ENCODE measurements at regions of chr22 and their contacts with region 1.

Region 1: GRCh38 chr22:35648066-35649025 is at the start of gene APOL6:
- DNase-seq: peak; percentile 78 to 83 (median 80)
- H3K4me3 ChIP-seq: peak within 1 kb of the TSS; percentile 90
- H3K4me3 Mint-ChIP-seq: peak within 1 kb of the TSS; percentile 100
- H3K27ac ChIP-seq: peak within 1 kb of the TSS; percentile 96
- H3K27ac Mint-ChIP-seq: peak within 1 kb of the TSS; percentile 99 to 100 (median 99)
- H3K4me1 ChIP-seq: peaks cover 33% of the 10 kb centered on the region
- H3K4me1 Mint-ChIP-seq: peaks cover 14 to 65% (median 35%) of the 10 kb centered on the region in 4 donors
- H3K27me3 ChIP-seq: no peaks in the 10 kb centered on the region
- H3K27me3 Mint-ChIP-seq: no peaks in the 10 kb centered on the region
- total RNA-seq, gene APOL6: 50.6 to 52.0 TPM

Region 2: GRCh38 chr22:35627264-35628041 is 20.9 kb before region 1 on chr22:
- CTCF ChIA-PET with region 1: interaction called, 12 read pairs
- POLR2A ChIA-PET with region 1: interaction called, 13 read pairs
- intact Hi-C with region 1: no loop called
- DNase-seq: peak in 4 of 5 donors; percentile 22 to 37 (median 31)
- H3K4me3 ChIP-seq: peak overlapping the region in 1 of 2 donors; percentile 30
- H3K4me3 Mint-ChIP-seq: peak overlapping the region; percentile 31 to 85 (median 72)
- H3K27ac ChIP-seq: no peak overlapping the region
- H3K27ac Mint-ChIP-seq: peak overlapping the region; percentile 10 to 74 (median 66)
- H3K4me1 ChIP-seq: peaks cover 16% of the 10 kb centered on the region
- H3K4me1 Mint-ChIP-seq: peaks cover 10 to 23% (median 18%) of the 10 kb centered on the region in 4 donors
- H3K27me3 ChIP-seq: no peaks in the 10 kb centered on the region
- H3K27me3 Mint-ChIP-seq: peaks cover 0 to 2% of the 10 kb centered on the region in 2 donors

Region 3: DNA sequence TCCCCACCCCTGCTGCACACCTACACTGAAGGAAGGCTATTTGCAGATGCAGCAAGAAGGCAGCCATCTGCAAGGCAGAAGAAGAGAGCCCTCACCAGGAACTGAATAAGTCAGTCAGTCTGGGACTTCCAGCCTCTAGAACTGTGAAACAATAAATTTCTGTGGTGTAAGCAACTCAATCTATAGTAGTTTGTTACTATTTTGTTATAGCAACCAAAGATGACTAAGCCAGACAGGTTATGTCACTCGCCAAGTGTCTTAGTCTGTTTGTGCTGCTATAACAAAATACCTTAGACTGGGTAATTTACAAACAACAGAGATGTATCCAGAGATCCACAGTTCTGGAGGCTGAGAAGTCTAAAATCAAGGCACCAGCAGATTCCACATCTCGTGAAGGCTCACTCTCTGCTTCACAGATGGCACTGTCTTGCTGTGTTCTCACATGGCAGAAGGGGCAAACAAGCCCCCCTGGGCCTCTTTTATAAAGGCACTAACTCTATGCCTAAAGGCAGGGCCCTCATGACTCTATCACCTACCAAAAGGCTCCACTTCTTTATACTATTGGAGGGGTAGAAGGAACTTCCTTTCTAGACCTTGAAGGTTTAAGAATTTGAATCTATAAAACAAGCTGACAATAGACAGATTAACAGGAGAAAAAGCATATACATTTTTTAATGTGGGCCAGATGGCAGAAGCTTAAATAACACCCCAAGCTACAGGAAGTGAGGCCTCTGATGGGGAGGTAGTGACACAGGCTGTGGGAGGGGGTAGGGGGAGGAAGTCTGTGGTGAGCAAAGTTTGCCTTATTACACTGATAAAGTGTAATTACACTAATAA is 12.2 kb after region 1 on chr22:
- CTCF ChIA-PET with region 1: interaction called, 13 read pairs
- POLR2A ChIA-PET with region 1: interaction called, 214 read pairs
- intact Hi-C with region 1: loop called (anchors 1 kb)
- DNase-seq: peak; percentile 78 to 91 (median 80)
- H3K4me3 ChIP-seq: peak overlapping the region; percentile 11 to 34
- H3K4me3 Mint-ChIP-seq: peak overlapping the region; percentile 52 to 87 (median 79)
- H3K27ac ChIP-seq: peak overlapping the region; percentile 90
- H3K27ac Mint-ChIP-seq: peak overlapping the region; percentile 92 to 99 (median 96)
- H3K4me1 ChIP-seq: peaks cover 80% of the 10 kb centered on the region
- H3K4me1 Mint-ChIP-seq: peaks cover 45 to 87% (median 70%) of the 10 kb centered on the region in 4 donors
- H3K27me3 ChIP-seq: no peaks in the 10 kb centered on the region
- H3K27me3 Mint-ChIP-seq: no peaks in the 10 kb centered on the region

Region 4: GRCh38 chr22:35703861-35704584 is 55.7 kb after region 1 on chr22:
- CTCF ChIA-PET with region 1: no interaction called
- POLR2A ChIA-PET with region 1: no interaction called
- intact Hi-C with region 1: loop called (anchors 5 kb)
- DNase-seq: no peak
- H3K4me3 ChIP-seq: no peak overlapping the region
- H3K4me3 Mint-ChIP-seq: no peak overlapping the region
- H3K27ac ChIP-seq: no peak overlapping the region
- H3K27ac Mint-ChIP-seq: no peak overlapping the region
- H3K4me1 ChIP-seq: no peaks in the 10 kb centered on the region
- H3K4me1 Mint-ChIP-seq: no peaks in the 10 kb centered on the region
- H3K27me3 ChIP-seq: no peaks in the 10 kb centered on the region
- H3K27me3 Mint-ChIP-seq: no peaks in the 10 kb centered on the region

Measured in CD4-positive, alpha-beta memory T cell (primary cell).